Calu3 (cell line): ENCODE measurements at regions of chr4 and their contacts with region 1.

Region 1: DNA sequence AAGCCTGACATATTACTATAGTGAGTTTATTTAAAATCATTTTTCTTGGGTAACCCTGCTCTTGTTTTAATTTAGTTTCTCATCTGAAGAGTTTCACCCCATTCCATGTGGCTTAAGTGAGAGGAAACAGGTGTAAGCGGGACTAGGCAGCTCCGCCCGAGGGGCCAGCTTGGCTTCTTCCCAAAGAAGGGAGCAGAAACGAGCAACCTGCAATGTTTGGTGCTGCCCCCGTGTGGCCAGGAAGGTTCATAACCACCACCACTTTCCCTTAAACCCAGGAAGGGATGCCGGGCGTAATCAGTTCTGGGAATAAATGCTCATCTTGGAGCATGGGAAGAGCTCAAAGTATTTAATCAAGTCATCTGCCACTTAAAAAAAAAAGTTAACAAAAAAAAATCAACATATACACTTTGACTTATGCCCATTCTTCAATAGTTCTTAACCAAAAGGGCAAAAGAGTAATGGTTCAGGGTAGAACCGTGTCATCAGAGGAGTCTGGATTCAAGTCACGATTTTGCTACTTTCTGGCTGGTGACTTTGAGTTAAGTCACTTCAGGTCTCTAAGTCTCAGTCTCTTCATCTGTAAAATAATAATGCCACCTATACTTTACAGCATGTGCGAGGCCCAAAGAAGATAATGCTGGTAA is 147.9 kb downstream of the NSUN7 start:
- DNase-seq: peak; percentile 70
- H3K4me3 Mint-ChIP-seq: peak overlapping the region; percentile 32
- H3K27ac Mint-ChIP-seq: no peak overlapping the region
- H3K4me1 Mint-ChIP-seq: no peaks in the 10 kb centered on the region
- H3K27me3 Mint-ChIP-seq: no peaks in the 10 kb centered on the region
- CTCF ChIP-seq: peak; percentile 38

Region 2: DNA sequence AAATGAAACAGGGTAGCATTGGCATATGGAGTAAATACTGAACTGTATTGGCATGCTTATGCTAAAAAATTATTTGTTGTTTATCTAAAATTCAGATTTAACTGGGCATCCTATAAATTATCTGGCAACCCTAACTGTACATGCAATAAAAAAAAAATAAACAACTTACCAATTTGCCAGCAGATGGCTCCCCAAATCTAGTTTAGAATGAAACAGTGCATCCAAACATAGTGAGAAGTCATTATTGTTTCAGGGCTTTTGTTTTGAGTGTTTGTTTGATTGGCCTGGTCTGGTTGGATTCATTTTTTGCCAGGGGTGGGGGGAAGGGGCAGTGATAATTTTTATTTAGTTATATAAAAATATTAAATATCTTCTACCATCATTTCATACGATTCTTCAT is 160.8 kb before region 1 on chr4:
- CTCF ChIA-PET with region 1: interaction called, 4 read pairs
- intact Hi-C with region 1: loop called (anchors 2 kb)
- DNase-seq: no peak
- H3K4me3 Mint-ChIP-seq: no peak overlapping the region
- H3K27ac Mint-ChIP-seq: no peak overlapping the region
- H3K4me1 Mint-ChIP-seq: peaks cover 2% of the 10 kb centered on the region
- H3K27me3 Mint-ChIP-seq: no peaks in the 10 kb centered on the region
- CTCF ChIP-seq: no peak

Region 3: DNA sequence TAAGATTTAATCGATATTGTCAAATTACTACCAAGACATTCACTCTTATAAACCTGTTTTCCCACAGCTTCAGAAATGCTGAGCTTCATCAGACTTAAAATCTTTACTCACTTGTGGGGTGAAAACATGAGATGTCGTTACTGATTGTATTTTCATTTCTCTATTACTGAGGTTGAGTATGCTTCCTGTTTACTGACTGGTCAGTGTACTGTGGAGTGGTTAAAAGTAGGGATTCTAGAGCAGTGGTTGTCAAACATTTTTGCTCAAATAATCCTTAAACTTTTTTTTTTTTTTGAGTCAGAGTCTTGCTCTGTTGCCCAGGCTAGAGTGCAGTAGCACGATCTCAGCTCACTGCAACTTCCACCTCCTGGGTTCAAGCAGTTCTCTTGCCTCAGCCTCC is 97.6 kb before region 1 on chr4:
- CTCF ChIA-PET with region 1: no interaction called
- intact Hi-C with region 1: no loop called
- DNase-seq: no peak
- H3K4me3 Mint-ChIP-seq: no peak overlapping the region
- H3K27ac Mint-ChIP-seq: no peak overlapping the region
- H3K4me1 Mint-ChIP-seq: no peaks in the 10 kb centered on the region
- H3K27me3 Mint-ChIP-seq: no peaks in the 10 kb centered on the region
- CTCF ChIP-seq: no peak

Region 4: GRCh38 chr4:41160012-41160789 is 262.5 kb after region 1 on chr4:
- CTCF ChIA-PET with region 1: no interaction called
- intact Hi-C with region 1: no loop called
- DNase-seq: no peak
- H3K4me3 Mint-ChIP-seq: no peak overlapping the region
- H3K27ac Mint-ChIP-seq: no peak overlapping the region
- H3K4me1 Mint-ChIP-seq: no peaks in the 10 kb centered on the region
- H3K27me3 Mint-ChIP-seq: no peaks in the 10 kb centered on the region
- CTCF ChIP-seq: no peak